ENCODE measurements at regions of chr11 and their contacts with region 1.

Region 1: DNA sequence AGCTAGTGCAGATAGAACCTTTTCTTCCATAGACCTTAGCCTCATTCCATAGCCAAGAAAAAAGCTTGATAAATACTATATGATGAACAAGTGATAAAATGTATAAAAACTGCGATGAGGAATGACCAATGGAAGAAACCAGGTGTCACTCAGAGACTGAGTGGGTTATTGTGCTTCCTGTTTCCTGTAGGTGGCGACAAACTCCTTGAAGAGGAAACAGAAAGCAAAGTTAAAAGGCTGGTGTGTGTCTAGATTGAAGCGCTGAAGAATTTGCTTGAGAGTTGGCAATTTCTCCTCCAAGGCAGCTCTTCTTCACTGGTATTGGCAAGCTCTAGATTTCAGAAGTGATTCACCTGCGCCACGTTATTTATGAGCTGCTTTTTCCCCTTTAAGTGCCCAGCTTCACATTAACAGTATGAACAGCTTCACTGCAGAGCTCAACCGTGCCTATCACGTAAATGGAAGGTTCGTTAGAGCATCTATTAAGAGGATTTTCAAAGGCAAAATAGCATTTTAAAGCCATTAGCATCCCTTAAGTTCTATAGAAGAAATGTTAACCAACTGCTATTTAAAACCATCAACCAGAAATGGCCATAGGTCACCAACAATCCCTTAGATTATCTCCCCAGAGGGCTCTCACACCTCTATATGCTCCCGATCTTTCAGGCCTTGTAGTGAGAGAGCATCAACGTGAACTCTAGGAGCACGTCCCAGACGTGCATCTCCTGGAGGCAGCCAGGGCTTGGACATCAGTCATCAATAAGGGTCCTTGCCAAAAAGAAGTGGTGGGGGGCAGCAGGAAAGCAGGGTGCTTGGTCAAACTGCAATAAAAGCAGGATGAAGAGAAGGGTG is 179.4 kb downstream of the CADM1 start:
- DNase-seq: peak in 1 of 2 donors; percentile 21
- H3K4me3 ChIP-seq: peak overlapping the region in 1 of 2 donors; percentile 5
- H3K27ac ChIP-seq: no peak overlapping the region
- H3K4me1 ChIP-seq: peaks cover 0 to 3% (median 0%) of the 10 kb centered on the region in 4 donors
- H3K27me3 ChIP-seq: no peaks in the 10 kb centered on the region
- CTCF ChIP-seq: peak; percentile 59 to 62

Region 2: DNA sequence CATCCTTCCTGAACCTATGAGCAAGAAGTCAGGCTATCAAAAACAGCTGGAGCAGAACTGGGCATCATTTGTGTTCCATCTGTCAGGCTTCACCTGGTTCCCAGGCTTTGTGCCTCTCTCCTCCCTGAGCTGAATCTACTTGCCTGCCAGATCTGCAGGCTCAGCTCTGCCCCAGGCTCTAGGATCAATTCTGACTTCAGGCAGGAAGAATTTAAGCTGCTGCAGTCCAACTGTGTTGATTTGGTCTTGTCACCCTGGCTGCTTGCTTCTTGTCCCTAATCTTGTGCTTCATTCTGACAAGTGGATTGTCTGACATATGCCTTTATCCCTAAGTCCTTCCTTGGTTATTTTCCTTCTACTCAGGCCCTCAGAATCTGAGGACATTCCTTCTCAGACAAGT is 211.0 kb after region 1 on chr11:
- intact Hi-C with region 1: no loop called
- DNase-seq: no peak
- H3K4me3 ChIP-seq: no peak overlapping the region
- H3K27ac ChIP-seq: no peak overlapping the region
- H3K4me1 ChIP-seq: no peaks in the 10 kb centered on the region
- H3K27me3 ChIP-seq: peaks cover 0 to 8% of the 10 kb centered on the region in 2 donors
- CTCF ChIP-seq: no peak

Region 3: GRCh38 chr11:116276051-116277044 is 951.5 kb after region 1 on chr11:
- intact Hi-C with region 1: loop called (anchors 10 kb)
- DNase-seq: peak in 1 of 2 donors; percentile 76
- H3K4me3 ChIP-seq: no peak overlapping the region
- H3K27ac ChIP-seq: no peak overlapping the region
- H3K4me1 ChIP-seq: peaks cover 0 to 6% (median 3%) of the 10 kb centered on the region in 4 donors
- H3K27me3 ChIP-seq: peaks cover 0 to 16% of the 10 kb centered on the region in 2 donors
- CTCF ChIP-seq: peak in 1 of 2 experiments; percentile 30